ENCODE measurements at regions of chr6 and their contacts with region 1.

Region 1: DNA sequence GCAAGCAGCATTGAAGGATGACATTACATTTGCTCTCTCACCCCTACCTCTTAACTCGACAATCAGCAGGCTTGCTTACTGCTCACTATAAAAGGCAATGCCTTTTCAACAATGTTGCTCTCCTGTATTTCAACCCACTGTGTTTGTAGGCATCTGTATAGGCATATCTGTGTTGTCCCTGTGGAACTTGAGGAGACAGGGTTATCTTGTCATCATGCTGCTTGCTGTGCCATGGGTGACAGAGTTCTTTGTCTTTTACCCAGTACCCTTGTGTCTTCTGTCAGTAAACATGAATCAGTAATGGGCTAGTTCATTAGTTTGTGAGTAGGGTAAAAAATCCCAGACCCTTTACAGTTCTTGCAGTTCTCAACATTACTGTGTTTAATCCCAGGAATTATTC is 25.2 kb downstream of the PHF3 start:
- DNase-seq: no peak
- H3K4me3 Mint-ChIP-seq: no peak overlapping the region
- H3K27ac Mint-ChIP-seq: no peak overlapping the region
- H3K4me1 Mint-ChIP-seq: peaks cover 71% of the 10 kb centered on the region
- H3K27me3 Mint-ChIP-seq: no peaks in the 10 kb centered on the region

Region 2: GRCh38 chr6:63643862-63644261 is 16.9 kb before region 1 on chr6:
- CTCF ChIA-PET with region 1: interaction called, 7 read pairs
- intact Hi-C with region 1: loop called (anchors 2 kb)
- DNase-seq: no peak
- H3K4me3 Mint-ChIP-seq: no peak overlapping the region
- H3K27ac Mint-ChIP-seq: no peak overlapping the region
- H3K4me1 Mint-ChIP-seq: peaks cover 66% of the 10 kb centered on the region
- H3K27me3 Mint-ChIP-seq: no peaks in the 10 kb centered on the region

Region 3: GRCh38 chr6:63649269-63649668 is 11.5 kb before region 1 on chr6:
- CTCF ChIA-PET with region 1: interaction called, 7 read pairs
- intact Hi-C with region 1: loop called (anchors 1 kb)
- DNase-seq: no peak
- H3K4me3 Mint-ChIP-seq: no peak overlapping the region
- H3K27ac Mint-ChIP-seq: no peak overlapping the region
- H3K4me1 Mint-ChIP-seq: peaks cover 63% of the 10 kb centered on the region
- H3K27me3 Mint-ChIP-seq: no peaks in the 10 kb centered on the region

Region 4: DNA sequence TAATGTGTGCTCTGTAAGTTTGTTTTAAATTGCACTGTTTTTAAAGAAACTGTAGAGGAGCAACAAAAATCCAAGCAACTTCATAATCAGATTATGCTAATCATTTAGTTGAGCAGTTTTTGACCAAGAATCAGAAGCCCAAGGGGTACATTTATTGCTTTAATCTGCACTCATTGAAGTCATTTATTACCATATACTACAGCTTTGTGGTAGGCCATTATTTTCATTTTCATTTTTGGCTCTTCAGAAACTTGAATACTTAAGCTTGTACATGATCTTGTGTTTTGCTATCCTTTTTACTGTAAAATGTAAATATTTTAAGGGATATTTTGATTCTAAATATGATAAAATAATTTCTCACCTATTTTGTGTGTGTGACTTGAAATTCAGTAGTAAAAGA is 53.3 kb after region 1 on chr6:
- CTCF ChIA-PET with region 1: no interaction called
- intact Hi-C with region 1: no loop called
- DNase-seq: no peak
- H3K4me3 Mint-ChIP-seq: no peak overlapping the region
- H3K27ac Mint-ChIP-seq: no peak overlapping the region
- H3K4me1 Mint-ChIP-seq: peaks cover 2% of the 10 kb centered on the region
- H3K27me3 Mint-ChIP-seq: no peaks in the 10 kb centered on the region